ENCODE measurements at regions of chr12 and their contacts with region 1.

Region 1: GRCh38 chr12:54251667-54252284 is 28.1 kb downstream of the CBX5 start:
- DNase-seq: no peak
- ATAC-seq: peak; percentile 45
- H3K4me3 Mint-ChIP-seq: no peak overlapping the region
- H3K27ac Mint-ChIP-seq: peak overlapping the region; percentile 19
- H3K4me1 Mint-ChIP-seq: peaks cover 4% of the 10 kb centered on the region
- H3K27me3 Mint-ChIP-seq: no peaks in the 10 kb centered on the region

Region 2: DNA sequence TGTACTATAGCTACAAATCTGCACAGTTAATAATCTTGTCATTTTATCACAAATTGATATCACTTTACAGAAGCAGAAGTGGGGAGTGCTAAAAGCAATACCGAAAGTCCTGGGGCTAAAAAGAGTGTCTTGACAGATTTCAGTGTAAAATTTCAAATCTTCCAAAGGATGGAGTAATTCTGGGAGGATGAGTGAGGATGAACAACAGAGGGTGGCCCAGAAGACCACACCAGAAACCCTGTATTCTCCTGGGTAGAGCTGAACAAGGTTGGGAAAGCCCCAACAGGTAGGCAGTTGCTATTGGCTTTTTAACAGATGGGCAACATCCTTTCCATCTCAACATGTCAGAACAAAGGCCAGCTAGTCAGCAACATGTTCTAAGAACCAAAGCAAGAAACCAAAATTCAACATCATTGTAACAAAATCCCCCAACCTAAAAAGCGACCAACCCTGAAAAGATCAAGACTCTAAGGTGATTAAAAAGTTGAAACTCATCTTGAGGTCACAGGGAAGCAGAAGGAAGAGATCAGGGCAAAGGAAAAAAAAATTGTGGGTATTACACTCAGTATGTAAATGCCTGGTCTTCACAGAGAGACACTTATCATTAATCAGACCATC is 10.7 kb before region 1 on chr12:
- CTCF ChIA-PET with region 1: interaction called, 24 read pairs
- DNase-seq: no peak
- ATAC-seq: no peak
- H3K4me3 Mint-ChIP-seq: no peak overlapping the region
- H3K27ac Mint-ChIP-seq: peak overlapping the region; percentile 52
- H3K4me1 Mint-ChIP-seq: peaks cover 15% of the 10 kb centered on the region
- H3K27me3 Mint-ChIP-seq: no peaks in the 10 kb centered on the region

Region 3: GRCh38 chr12:54265364-54265812 is 13.6 kb after region 1 on chr12:
- CTCF ChIA-PET with region 1: interaction called, 27 read pairs
- DNase-seq: no peak
- ATAC-seq: no peak
- H3K4me3 Mint-ChIP-seq: no peak overlapping the region
- H3K27ac Mint-ChIP-seq: no peak overlapping the region
- H3K4me1 Mint-ChIP-seq: peaks cover 23% of the 10 kb centered on the region
- H3K27me3 Mint-ChIP-seq: no peaks in the 10 kb centered on the region

Region 4: DNA sequence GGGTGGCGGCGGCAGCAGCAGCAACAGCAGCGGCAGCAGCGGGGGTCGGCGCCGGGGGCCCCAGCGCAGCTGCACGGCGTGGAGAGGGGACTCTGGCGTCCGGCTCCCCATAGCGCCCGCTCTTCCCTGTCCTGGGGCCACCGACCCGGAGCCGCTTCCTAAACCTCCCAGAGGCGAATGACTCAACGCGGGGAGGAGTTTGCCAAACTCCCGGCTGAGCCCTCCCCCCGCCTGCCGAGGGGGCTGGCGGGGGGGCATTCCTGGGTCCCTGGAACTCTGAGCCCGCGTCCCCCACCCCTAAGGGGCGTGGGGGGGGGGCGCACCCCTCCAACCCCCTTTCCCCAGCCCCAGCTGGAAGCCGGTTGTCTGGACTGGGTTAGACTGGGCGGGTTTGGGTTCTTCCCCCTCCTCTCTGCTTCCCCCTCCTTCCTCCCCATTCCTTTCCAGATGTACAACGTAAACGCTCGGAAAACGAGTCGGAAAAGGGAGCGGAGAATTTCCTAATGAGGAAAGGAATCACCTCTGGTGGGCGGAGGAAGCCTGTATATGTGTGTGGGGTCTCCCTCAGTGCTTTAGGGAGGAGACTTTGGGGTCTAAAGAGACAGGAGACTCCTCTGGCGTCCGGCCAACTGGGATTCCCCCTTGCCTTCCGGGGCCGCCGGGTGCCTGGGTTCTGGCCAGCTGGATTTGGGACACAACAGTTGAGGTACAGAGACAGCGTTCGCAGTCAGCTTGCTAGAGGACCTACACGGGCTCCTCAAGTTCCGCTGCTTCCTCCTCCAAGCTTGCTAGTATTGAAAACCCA is 167.5 kb after region 1 on chr12 and contains the start of gene ITGA5:
- CTCF ChIA-PET with region 1: no interaction called
- DNase-seq: peak; percentile 56
- ATAC-seq: peak; percentile 66
- H3K4me3 Mint-ChIP-seq: peak within 1 kb of the TSS; percentile 88
- H3K27ac Mint-ChIP-seq: peak within 1 kb of the TSS; percentile 82
- H3K4me1 Mint-ChIP-seq: peaks cover 44% of the 10 kb centered on the region
- H3K27me3 Mint-ChIP-seq: peaks cover 36% of the 10 kb centered on the region
- total RNA-seq, gene ITGA5: 13.2 to 37.6 TPM